ENCODE measurements at regions of chr6 and their contacts with region 1.

Region 1: DNA sequence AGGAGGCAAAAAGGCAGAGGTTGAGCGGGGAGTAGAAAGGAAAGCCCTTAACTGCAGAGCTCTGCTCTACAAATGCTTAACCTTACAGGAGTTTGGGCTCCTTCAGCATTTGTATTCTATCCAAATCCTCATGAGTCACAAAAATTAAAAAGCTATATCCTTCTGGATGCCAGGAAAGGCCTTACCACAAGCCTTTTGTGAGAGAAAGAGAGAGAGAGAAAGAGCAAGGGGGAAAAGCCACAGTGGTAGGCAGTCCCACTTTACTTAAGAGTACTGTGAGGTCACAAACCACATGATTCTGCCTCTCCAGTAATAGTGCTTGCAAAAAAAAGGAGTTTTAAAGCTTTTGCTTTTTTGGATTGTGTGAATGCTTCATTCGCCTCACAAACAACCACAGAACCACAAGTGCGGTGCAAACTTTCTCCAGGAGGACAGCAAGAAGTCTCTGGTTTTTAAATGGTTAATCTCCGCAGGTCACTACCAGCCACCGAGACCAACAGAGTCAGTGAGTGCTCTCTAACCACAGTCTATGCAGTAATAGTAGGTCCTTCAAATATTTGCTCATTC is at the start of gene RUNX2:
- DNase-seq: no peak
- ATAC-seq: peak; percentile 53 to 63
- total RNA-seq, gene RUNX2: 0.44 to 0.68 TPM

Region 2: GRCh38 chr6:45344900-45345299 is 16.9 kb after region 1 on chr6:
- intact Hi-C with region 1: loop called in 1 of 2 experiments (anchors 2 kb)
- DNase-seq: no peak
- ATAC-seq: no peak

Measured in left cardiac atrium (tissue), 4 donors.